ENCODE measurements at regions of chr6 and their contacts with region 1.

Region 1: DNA sequence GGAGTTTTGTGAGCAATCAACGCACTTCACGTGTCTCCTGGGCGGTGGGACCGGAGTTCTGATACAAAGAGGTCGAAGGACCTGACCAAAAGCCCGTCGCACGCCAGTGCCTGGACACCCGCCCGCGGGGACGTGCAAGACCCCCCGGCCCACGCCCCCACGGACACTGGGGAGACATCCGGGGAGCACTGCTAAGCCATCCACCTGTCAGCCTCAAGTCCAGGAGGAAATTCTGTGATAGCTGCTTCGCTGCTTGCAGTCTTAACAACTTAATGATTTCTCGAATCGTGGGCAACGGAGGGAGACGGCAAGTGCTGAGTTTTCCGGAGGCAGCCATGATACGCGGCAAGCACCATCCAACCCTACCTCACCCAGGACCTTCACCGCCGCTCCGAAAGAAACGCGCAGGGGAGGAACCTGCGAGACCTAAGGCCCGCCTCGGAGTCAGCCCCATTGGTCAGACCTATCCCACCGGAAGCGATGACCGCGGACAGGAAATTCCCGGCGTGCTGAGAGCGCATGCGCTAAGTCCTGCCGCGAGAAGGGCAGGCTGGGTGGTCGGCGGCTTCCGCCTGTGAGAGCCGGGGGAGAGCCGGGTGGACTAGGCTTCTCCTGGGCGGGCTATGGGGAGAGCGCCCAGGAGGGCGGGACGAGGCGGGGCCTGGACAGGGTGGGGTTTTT is at the start of gene TFB1M:
- DNase-seq: peak; percentile 92 to 99 (median 96)
- H3K4me3 ChIP-seq: peak within 1 kb of the TSS; percentile 84
- H3K4me3 Mint-ChIP-seq: peak within 1 kb of the TSS; percentile 96 to 99 (median 97)
- H3K27ac ChIP-seq: peak within 1 kb of the TSS; percentile 87
- H3K27ac Mint-ChIP-seq: peak within 1 kb of the TSS; percentile 92 to 99 (median 96)
- H3K4me1 ChIP-seq: peaks cover 19% of the 10 kb centered on the region
- H3K4me1 Mint-ChIP-seq: peaks cover 30 to 54% (median 48%) of the 10 kb centered on the region in 3 donors
- H3K27me3 ChIP-seq: no peaks in the 10 kb centered on the region
- H3K27me3 Mint-ChIP-seq: no peaks in the 10 kb centered on the region
- total RNA-seq, gene TFB1M: 37.7 to 40.8 TPM

Region 2: DNA sequence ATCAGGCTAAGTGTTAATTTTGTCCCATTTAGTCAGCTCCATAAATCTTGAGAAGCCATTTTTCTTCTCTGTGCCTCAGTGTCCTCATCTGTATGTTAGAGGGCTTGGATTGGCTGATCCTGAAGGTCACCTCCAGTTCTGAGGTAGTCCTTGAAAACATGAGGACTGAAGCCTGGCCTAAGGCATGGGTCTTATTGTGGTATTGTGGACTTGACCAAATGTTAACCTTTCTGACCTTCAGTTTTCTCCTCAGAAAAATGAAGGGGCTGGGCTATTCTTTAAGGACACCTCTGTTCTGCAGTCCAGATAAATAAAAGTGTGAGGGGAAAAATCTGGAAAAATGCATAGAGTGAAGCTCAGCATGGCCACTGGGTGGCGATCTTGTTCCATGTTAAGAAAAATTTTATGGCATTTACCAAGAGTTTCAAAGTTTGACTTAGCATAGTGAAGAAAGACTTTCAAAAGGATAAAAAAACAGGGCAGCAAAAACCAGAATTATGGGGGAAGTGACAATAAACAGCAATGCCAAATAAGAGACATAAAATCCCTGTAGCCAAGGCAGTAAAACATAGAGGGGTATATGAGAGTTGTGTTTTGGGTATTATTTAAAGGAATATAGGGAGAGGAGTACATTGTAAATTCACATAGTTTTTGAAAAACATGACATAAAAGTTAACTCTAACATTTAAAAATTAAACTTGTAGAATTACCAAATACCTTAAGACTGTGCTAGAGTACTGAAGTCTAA is 13.3 kb after region 1 on chr6:
- CTCF ChIA-PET with region 1: interaction called, 16 read pairs
- POLR2A ChIA-PET with region 1: no interaction called
- DNase-seq: peak; percentile 42 to 61 (median 48)
- H3K4me3 ChIP-seq: no peak overlapping the region
- H3K4me3 Mint-ChIP-seq: no peak overlapping the region
- H3K27ac ChIP-seq: no peak overlapping the region
- H3K27ac Mint-ChIP-seq: no peak overlapping the region
- H3K4me1 ChIP-seq: peaks cover 5% of the 10 kb centered on the region
- H3K4me1 Mint-ChIP-seq: peaks cover 0 to 5% (median 0%) of the 10 kb centered on the region in 3 donors
- H3K27me3 ChIP-seq: no peaks in the 10 kb centered on the region
- H3K27me3 Mint-ChIP-seq: peaks cover 3 to 6% of the 10 kb centered on the region in 2 donors

Region 3: DNA sequence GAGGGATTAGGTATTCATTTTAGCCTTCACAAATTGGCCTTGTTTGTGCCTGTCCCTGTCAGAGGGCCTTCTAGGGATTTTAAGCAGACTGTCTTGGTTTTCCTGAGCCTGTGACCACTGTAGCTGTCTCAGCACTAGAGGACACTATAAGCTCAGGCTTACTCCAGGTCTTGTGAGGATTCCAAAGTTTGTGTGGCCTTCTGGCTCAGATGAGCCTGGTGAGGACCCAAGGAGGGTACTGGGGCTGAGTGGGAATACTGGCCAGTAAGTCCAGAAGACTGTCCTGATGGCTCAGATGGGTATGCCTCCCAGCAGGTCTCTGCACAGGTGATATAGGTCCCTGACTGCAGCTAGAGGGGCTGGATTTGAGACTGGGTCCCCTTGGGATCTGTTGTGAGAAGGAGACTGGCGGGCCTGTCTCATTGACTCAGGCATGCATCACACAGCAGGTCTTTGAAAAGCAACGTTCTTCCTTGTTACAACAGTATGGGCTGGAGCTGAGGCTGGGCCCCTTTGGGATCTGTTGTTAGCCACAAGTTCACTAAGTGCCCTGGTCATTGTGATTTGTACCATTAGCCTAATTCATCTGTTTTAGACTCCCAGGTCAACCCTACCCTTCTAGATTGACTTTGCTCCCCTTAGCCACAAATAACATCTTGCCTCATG is 26.4 kb after region 1 on chr6:
- CTCF ChIA-PET with region 1: no interaction called
- POLR2A ChIA-PET with region 1: no interaction called
- DNase-seq: no peak
- H3K4me3 ChIP-seq: no peak overlapping the region
- H3K4me3 Mint-ChIP-seq: no peak overlapping the region
- H3K27ac ChIP-seq: no peak overlapping the region
- H3K27ac Mint-ChIP-seq: no peak overlapping the region
- H3K4me1 ChIP-seq: peaks cover 4% of the 10 kb centered on the region
- H3K4me1 Mint-ChIP-seq: peaks cover 5 to 17% (median 11%) of the 10 kb centered on the region in 3 donors
- H3K27me3 ChIP-seq: no peaks in the 10 kb centered on the region
- H3K27me3 Mint-ChIP-seq: peaks cover 5 to 14% of the 10 kb centered on the region in 2 donors

Measured in CD8-positive, alpha-beta memory T cell (primary cell).